ENCODE measurements at regions of chr12 and their contacts with region 1.

Region 1: GRCh38 chr12:8108808-8109398 is 14.5 kb upstream of the CLEC4A start:
- DNase-seq: peak; percentile 90
- ATAC-seq: peak; percentile 74
- H3K4me3 Mint-ChIP-seq: no peak overlapping the region
- H3K27ac Mint-ChIP-seq: peak overlapping the region; percentile 34
- H3K4me1 Mint-ChIP-seq: peaks cover 4% of the 10 kb centered on the region
- H3K27me3 Mint-ChIP-seq: no peaks in the 10 kb centered on the region
- CTCF ChIP-seq: peak; percentile 100

Region 2: GRCh38 chr12:8088574-8088973 is 20.3 kb before region 1 on chr12:
- CTCF ChIA-PET with region 1: interaction called, 18 read pairs
- POLR2A ChIA-PET with region 1: no interaction called
- intact Hi-C with region 1: no loop called
- DNase-seq: peak; percentile 67
- ATAC-seq: peak; percentile 77
- H3K4me3 Mint-ChIP-seq: peak overlapping the region; percentile 52
- H3K27ac Mint-ChIP-seq: peak overlapping the region; percentile 94
- H3K4me1 Mint-ChIP-seq: peaks cover 45% of the 10 kb centered on the region
- H3K27me3 Mint-ChIP-seq: no peaks in the 10 kb centered on the region
- CTCF ChIP-seq: no peak

Region 3: DNA sequence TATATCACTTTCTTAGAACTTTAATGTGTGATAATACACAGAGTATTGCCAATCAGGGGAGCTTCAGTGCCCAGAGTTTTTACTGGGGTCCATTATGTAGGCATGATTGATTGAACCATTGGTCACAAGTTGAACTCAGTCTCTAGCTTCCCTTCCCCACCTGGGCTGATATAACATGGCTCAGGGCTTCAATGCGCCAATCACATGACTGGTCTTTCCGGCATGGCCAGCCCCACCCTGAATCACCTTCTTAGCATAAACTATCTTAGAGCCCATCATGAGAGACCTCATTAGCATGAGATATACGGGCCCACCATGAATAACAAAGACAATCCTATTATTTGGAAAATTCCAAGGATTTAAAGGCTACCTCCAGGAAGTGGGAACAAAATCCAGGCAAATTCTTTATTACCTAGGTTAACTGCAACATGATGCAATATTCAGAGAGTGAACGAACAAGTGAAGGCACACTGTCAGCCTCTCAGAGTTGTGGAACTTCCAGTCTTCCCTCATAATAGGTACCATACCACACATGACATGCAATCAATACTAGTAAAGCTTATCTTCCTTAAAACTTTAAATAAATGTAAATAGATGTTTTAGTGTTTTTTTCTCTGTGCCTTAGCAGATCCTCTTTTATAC is 11.3 kb after region 1 on chr12:
- CTCF ChIA-PET with region 1: interaction called, 18 read pairs
- POLR2A ChIA-PET with region 1: no interaction called
- intact Hi-C with region 1: no loop called
- DNase-seq: no peak
- ATAC-seq: no peak
- H3K4me3 Mint-ChIP-seq: no peak overlapping the region
- H3K27ac Mint-ChIP-seq: no peak overlapping the region
- H3K4me1 Mint-ChIP-seq: no peaks in the 10 kb centered on the region
- H3K27me3 Mint-ChIP-seq: no peaks in the 10 kb centered on the region
- CTCF ChIP-seq: no peak

Region 4: GRCh38 chr12:8127138-8127537 is 18.2 kb after region 1 on chr12:
- CTCF ChIA-PET with region 1: interaction called, 16 read pairs
- POLR2A ChIA-PET with region 1: no interaction called
- intact Hi-C with region 1: no loop called
- DNase-seq: peak; percentile 29
- ATAC-seq: peak; percentile 77
- H3K4me3 Mint-ChIP-seq: no peak overlapping the region
- H3K27ac Mint-ChIP-seq: peak overlapping the region; percentile 11
- H3K4me1 Mint-ChIP-seq: peaks cover 13% of the 10 kb centered on the region
- H3K27me3 Mint-ChIP-seq: no peaks in the 10 kb centered on the region
- CTCF ChIP-seq: no peak

Region 5: GRCh38 chr12:8226355-8226754 is 117.5 kb after region 1 on chr12:
- CTCF ChIA-PET with region 1: interaction called, 44 read pairs
- POLR2A ChIA-PET with region 1: no interaction called
- intact Hi-C with region 1: loop called (anchors 5 kb)
- DNase-seq: no peak
- ATAC-seq: no peak
- H3K4me3 Mint-ChIP-seq: no peak overlapping the region
- H3K27ac Mint-ChIP-seq: no peak overlapping the region
- H3K4me1 Mint-ChIP-seq: peaks cover 4% of the 10 kb centered on the region
- H3K27me3 Mint-ChIP-seq: peaks cover 5% of the 10 kb centered on the region
- CTCF ChIP-seq: no peak